Activated T-helper 1 cell treated with anti-CD3 and anti-CD28 coated beads, Interleukin-12 subunit alpha, Interleukin-12 subunit beta, Interleukin-2, Interleukin-4 antibody, amounts not matched to agents 30 ng/mL and 10 ng/mL and 1 ng/mL, durations not matched to agents 14 hours and 24 hours and 36 hours (primary cell): ENCODE measurements at regions of chr1 and their contacts with region 1.

Region 1: DNA sequence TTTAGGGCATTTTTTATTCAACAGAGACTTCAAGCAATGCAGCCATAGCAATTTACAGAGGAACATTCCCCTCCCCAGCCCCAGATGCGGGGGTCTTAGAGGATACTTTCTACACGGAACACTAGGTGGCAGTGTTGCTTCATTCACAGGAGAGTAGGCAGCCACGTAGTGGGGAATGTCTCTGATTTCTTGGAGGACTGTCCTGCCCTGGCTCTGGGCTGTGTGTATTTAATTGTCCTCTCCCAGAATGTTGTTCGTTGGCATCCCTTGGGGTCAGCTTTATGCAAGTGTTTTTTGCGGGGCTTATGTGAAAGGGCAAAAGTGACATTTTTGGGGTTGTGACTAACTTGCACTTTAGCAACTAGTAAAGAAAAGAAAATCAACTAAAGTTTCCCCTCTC is 96.9 kb downstream of the PAPPA2 start:
- DNase-seq: no peak
- H3K4me3 Mint-ChIP-seq: no peak overlapping the region
- H3K27ac Mint-ChIP-seq: no peak overlapping the region
- H3K4me1 Mint-ChIP-seq: no peaks in the 10 kb centered on the region
- H3K27me3 Mint-ChIP-seq: no peaks in the 10 kb centered on the region

Region 2: GRCh38 chr1:176101924-176102642 is 457.8 kb before region 1 on chr1:
- intact Hi-C with region 1: no loop called
- DNase-seq: no peak
- H3K4me3 Mint-ChIP-seq: no peak overlapping the region
- H3K27ac Mint-ChIP-seq: no peak overlapping the region
- H3K4me1 Mint-ChIP-seq: peaks cover 12% of the 10 kb centered on the region
- H3K27me3 Mint-ChIP-seq: no peaks in the 10 kb centered on the region

Region 3: DNA sequence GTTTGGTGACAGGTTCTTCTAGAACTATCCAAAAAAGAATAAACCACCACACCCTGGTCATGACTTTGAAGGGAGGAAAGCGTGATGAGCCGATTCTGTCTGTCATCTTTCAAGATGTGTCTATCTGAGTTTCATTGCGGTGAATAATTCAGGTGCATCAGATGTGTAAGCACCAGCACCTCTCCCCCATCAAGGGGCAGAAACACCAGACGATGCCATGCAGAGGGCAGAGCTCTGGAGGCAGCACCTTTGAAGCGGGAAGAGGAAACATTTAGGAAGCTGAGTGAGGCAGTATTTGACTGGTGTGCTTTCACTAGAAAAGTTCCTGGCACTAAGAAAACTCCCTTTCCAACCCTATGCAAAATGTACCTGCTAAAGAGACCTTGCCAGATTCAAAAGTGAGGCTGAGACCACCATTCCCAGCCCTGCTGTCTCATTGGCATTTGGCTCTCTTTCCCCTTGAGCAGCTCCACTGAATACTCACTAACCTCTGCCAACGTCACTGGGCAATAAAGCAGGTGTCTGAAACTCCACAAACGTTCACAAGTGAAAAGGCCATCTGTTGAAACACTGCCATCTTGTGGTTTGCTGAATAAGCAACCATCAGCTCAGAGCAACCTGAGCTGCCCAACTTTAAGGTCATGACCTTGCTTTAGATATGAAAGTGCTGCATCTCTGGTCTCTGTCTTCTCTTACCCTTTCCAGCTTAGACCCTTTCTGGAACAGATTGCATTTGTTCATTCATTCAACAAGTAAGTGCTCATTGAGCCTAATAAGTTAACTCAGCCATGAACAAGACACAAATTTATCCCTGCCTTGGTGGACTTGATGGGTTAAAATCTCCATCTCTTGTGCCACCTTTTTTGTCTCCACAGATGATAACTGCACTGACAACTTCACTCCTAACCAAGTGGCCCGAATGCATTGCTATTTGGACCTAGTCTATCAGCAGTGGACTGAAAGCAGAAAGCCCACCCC is 131.7 kb after region 1 on chr1:
- intact Hi-C with region 1: loop called (anchors 1 kb)
- DNase-seq: no peak
- H3K4me3 Mint-ChIP-seq: no peak overlapping the region
- H3K27ac Mint-ChIP-seq: no peak overlapping the region
- H3K4me1 Mint-ChIP-seq: no peaks in the 10 kb centered on the region
- H3K27me3 Mint-ChIP-seq: no peaks in the 10 kb centered on the region

Region 4: DNA sequence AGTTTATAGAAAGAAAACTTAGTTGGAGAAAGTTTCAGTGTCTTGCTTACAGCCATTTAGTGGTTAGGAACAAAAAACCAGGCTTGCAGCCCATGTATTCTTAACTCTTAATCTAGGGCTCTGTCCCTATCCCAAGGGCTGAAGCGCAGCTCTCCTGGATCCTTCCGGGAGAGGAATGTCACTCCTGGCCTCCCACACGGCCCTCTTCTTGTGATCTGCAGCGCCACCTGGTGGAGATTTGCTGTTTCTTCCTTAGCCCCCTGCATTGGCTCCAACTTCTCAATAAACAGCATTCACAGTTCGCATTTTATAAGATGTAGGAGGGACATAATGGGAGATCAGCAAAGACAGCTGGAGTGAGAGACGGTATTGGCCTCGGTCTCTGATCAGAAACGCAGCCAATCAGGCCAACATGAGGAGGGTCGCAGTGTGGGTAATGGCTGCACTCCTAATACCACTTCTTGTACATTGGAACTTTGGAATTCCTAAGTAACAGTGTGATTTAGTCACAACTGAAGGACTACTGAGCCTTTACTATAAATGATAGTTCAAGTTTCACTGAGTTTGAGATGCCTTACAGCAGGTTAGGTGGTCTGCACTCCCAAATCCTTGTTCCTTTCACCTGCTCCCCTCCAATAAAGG is 321.2 kb after region 1 on chr1:
- intact Hi-C with region 1: loop called (anchors 1 kb)
- DNase-seq: no peak
- H3K4me3 Mint-ChIP-seq: no peak overlapping the region
- H3K27ac Mint-ChIP-seq: no peak overlapping the region
- H3K4me1 Mint-ChIP-seq: no peaks in the 10 kb centered on the region
- H3K27me3 Mint-ChIP-seq: no peaks in the 10 kb centered on the region